Ascending aorta (tissue), 2 donors: ENCODE measurements at regions of chr2 and their contacts with region 1.

Region 1: GRCh38 chr2:197777823-197778407 is 7.2 kb downstream of the BOLL start:
- DNase-seq: no peak
- H3K4me3 ChIP-seq: no peak overlapping the region
- H3K27ac ChIP-seq: peak overlapping the region in 1 of 2 donors; percentile 9
- H3K4me1 ChIP-seq: peaks cover 0 to 14% of the 10 kb centered on the region in 2 donors
- H3K27me3 ChIP-seq: no peaks in the 10 kb centered on the region
- CTCF ChIP-seq: peak; percentile 59 to 80 (median 75)

Region 2: GRCh38 chr2:196801674-196802261 is 976.1 kb before region 1 on chr2:
- intact Hi-C with region 1: loop called (anchors 5 kb)
- DNase-seq: no peak
- H3K4me3 ChIP-seq: no peak overlapping the region
- H3K27ac ChIP-seq: no peak overlapping the region
- H3K4me1 ChIP-seq: no peaks in the 10 kb centered on the region
- H3K27me3 ChIP-seq: no peaks in the 10 kb centered on the region
- CTCF ChIP-seq: no peak

Region 3: GRCh38 chr2:197857476-197858107 is 79.7 kb after region 1 on chr2:
- intact Hi-C with region 1: no loop called
- DNase-seq: no peak
- H3K4me3 ChIP-seq: no peak overlapping the region
- H3K27ac ChIP-seq: no peak overlapping the region
- H3K4me1 ChIP-seq: peaks cover 0 to 17% of the 10 kb centered on the region in 2 donors
- H3K27me3 ChIP-seq: no peaks in the 10 kb centered on the region
- CTCF ChIP-seq: no peak